Activated CD8-positive, alpha-beta T cell treated with anti-CD3 and anti-CD28 coated beads, Interleukin-2, amount 10 ng/mL, durations not matched to agents 7 days and 5 days (primary cell): ENCODE measurements at regions of chr6 and their contacts with region 1.

Region 1: GRCh38 chr6:129498950-129499842 is 210.8 kb downstream of the ARHGAP18 start:
- DNase-seq: peak; percentile 39
- ATAC-seq: peak; percentile 60
- H3K4me3 Mint-ChIP-seq: peak overlapping the region; percentile 0
- H3K27ac Mint-ChIP-seq: peak overlapping the region; percentile 8
- H3K4me1 Mint-ChIP-seq: peaks cover 29% of the 10 kb centered on the region
- H3K27me3 Mint-ChIP-seq: no peaks in the 10 kb centered on the region

Region 2: DNA sequence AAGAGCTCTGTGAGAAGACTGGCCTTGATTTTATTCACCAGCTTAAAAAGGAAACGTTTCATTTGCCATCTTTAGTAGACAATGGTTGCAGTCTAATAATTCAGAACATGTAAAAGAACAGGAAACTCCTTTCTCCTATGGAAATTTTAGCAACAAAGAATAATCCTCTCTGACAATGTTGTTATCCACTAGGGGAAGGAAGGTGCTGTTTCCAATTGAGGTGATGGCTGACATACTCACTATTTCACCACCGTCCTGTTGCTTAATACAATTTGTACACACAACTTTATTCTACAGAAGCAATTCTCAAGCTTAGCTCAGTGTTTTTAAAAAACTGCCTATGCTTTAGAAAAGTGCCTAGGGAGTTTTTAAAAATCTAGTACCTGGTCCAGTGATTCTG is 18.1 kb after region 1 on chr6:
- CTCF ChIA-PET with region 1: interaction called, 14 read pairs
- POLR2A ChIA-PET with region 1: no interaction called
- DNase-seq: no peak
- ATAC-seq: no peak
- H3K4me3 Mint-ChIP-seq: no peak overlapping the region
- H3K27ac Mint-ChIP-seq: no peak overlapping the region
- H3K4me1 Mint-ChIP-seq: no peaks in the 10 kb centered on the region
- H3K27me3 Mint-ChIP-seq: peaks cover 2% of the 10 kb centered on the region

Region 3: GRCh38 chr6:129567374-129567773 is 68.2 kb after region 1 on chr6:
- CTCF ChIA-PET with region 1: interaction called, 51 read pairs
- POLR2A ChIA-PET with region 1: interaction called, 3 read pairs
- DNase-seq: peak; percentile 55
- ATAC-seq: peak; percentile 61
- H3K4me3 Mint-ChIP-seq: no peak overlapping the region
- H3K27ac Mint-ChIP-seq: no peak overlapping the region
- H3K4me1 Mint-ChIP-seq: no peaks in the 10 kb centered on the region
- H3K27me3 Mint-ChIP-seq: peaks cover 8% of the 10 kb centered on the region